ENCODE measurements at regions of chr19 and their contacts with region 1.

Region 1: GRCh38 chr19:13150187-13150930 is at the starts of genes IER2 and STX10:
- DNase-seq: peak; percentile 86 to 97 (median 94)
- ATAC-seq: peak; percentile 55
- H3K4me3 ChIP-seq: peak within 1 kb of the TSS; percentile 77 to 94
- H3K4me3 Mint-ChIP-seq: peak within 1 kb of the TSS; percentile 98
- H3K27ac ChIP-seq: peak within 1 kb of the TSS; percentile 96 to 99
- H3K27ac Mint-ChIP-seq: peak within 1 kb of the TSS; percentile 93
- H3K4me1 ChIP-seq: peaks cover 11% of the 10 kb centered on the region
- H3K4me1 Mint-ChIP-seq: peaks cover 26% of the 10 kb centered on the region
- H3K27me3 ChIP-seq: no peaks in the 10 kb centered on the region
- H3K27me3 Mint-ChIP-seq: no peaks in the 10 kb centered on the region
- CTCF ChIP-seq: peak; percentile 51
- total RNA-seq, gene IER2: 223 to 229 TPM
- total RNA-seq, gene STX10: 35.7 to 37.5 TPM

Region 2: GRCh38 chr19:12789904-12790619 is 360.3 kb before region 1 on chr19:
- CTCF ChIA-PET with region 1: no interaction called
- POLR2A ChIA-PET with region 1: interaction called, 4 read pairs
- intact Hi-C with region 1: loop called in 1 of 2 experiments (anchors 2 kb)
- DNase-seq: peak; percentile 84 to 98 (median 91)
- ATAC-seq: peak; percentile 29
- H3K4me3 ChIP-seq: peak overlapping the region; percentile 86 to 100
- H3K4me3 Mint-ChIP-seq: peak overlapping the region; percentile 93
- H3K27ac ChIP-seq: peak overlapping the region; percentile 100
- H3K27ac Mint-ChIP-seq: peak overlapping the region; percentile 97
- H3K4me1 ChIP-seq: peaks cover 47% of the 10 kb centered on the region
- H3K4me1 Mint-ChIP-seq: peaks cover 37% of the 10 kb centered on the region
- H3K27me3 ChIP-seq: no peaks in the 10 kb centered on the region
- H3K27me3 Mint-ChIP-seq: no peaks in the 10 kb centered on the region
- CTCF ChIP-seq: no peak

Region 3: DNA sequence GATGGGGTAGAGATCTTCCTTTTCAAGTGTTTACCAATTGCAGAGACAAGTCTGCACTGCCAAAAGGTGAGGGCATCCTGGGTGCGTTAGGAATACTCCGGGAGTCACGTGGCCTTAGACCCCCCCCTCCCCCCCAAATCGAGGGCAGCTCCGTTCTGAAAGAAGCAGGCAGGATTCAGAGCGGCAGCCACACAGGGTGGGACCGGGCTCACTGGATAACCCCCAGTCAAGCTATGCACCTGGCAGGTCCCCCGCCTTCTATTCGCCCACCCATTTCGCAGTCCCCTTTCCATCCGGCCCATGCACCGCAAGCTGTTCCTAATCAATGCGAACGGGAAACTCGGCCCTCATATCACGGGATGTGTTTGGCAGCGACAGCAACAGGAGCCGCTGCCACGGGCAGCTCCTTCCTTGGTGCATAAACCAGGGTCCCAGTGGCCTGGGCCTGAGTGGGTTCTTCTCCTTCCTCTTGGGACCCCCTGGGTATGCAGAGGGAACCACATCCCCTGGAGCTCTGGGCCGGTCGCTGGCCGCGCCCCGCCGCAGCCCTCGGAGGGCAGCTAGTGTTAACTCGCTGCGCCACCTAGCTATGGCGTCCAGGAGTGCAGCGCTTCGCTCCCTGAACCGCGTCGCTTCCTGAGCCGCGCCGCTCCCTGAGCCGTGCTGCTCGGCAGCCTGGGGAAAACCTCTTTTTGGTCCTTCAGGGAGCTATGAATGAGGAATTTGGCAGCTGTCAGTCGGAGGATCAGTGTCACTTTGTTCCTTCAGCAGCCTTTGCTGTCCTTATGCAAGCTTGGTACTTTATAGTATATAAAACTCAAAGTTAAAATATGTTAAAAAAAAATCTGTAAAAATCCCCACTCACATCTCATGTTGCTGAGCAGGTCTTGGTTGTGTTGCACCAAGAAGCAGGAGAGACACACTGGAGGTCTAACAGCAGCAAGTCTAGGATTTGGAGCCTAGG is 89.1 kb before region 1 on chr19:
- CTCF ChIA-PET with region 1: no interaction called
- POLR2A ChIA-PET with region 1: no interaction called
- intact Hi-C with region 1: no loop called
- DNase-seq: peak; percentile 61 to 86 (median 82)
- ATAC-seq: peak; percentile 98
- H3K4me3 ChIP-seq: peak overlapping the region; percentile 48 to 71
- H3K4me3 Mint-ChIP-seq: peak overlapping the region; percentile 82
- H3K27ac ChIP-seq: no peak overlapping the region
- H3K27ac Mint-ChIP-seq: no peak overlapping the region
- H3K4me1 ChIP-seq: peaks cover 8% of the 10 kb centered on the region
- H3K4me1 Mint-ChIP-seq: peaks cover 8% of the 10 kb centered on the region
- H3K27me3 ChIP-seq: peaks cover 0 to 2% of the 10 kb centered on the region in 2 experiments
- H3K27me3 Mint-ChIP-seq: peaks cover 13% of the 10 kb centered on the region
- CTCF ChIP-seq: peak; percentile 96

Region 4: GRCh38 chr19:13117772-13118423 is 32.5 kb before region 1 on chr19 and contains the start of gene NACC1:
- CTCF ChIA-PET with region 1: interaction called, 5 read pairs
- POLR2A ChIA-PET with region 1: interaction called, 72 read pairs
- intact Hi-C with region 1: loop called (anchors 1 kb)
- DNase-seq: peak; percentile 81 to 93 (median 87)
- ATAC-seq: peak; percentile 82
- H3K4me3 ChIP-seq: peak within 1 kb of the TSS; percentile 65 to 78
- H3K4me3 Mint-ChIP-seq: peak within 1 kb of the TSS; percentile 98
- H3K27ac ChIP-seq: peak within 1 kb of the TSS; percentile 41 to 61
- H3K27ac Mint-ChIP-seq: peak within 1 kb of the TSS; percentile 96
- H3K4me1 ChIP-seq: peaks cover 35% of the 10 kb centered on the region
- H3K4me1 Mint-ChIP-seq: peaks cover 60% of the 10 kb centered on the region
- H3K27me3 ChIP-seq: no peaks in the 10 kb centered on the region
- H3K27me3 Mint-ChIP-seq: no peaks in the 10 kb centered on the region
- CTCF ChIP-seq: no peak
- total RNA-seq, gene NACC1: 16.8 to 20.8 TPM

Region 5: GRCh38 chr19:13181747-13182388 is 31.5 kb after region 1 on chr19:
- CTCF ChIA-PET with region 1: interaction called, 12 read pairs
- POLR2A ChIA-PET with region 1: interaction called, 21 read pairs
- intact Hi-C with region 1: no loop called
- DNase-seq: peak in 7 of 9 experiments; percentile 24 to 79 (median 63)
- ATAC-seq: peak; percentile 75
- H3K4me3 ChIP-seq: no peak overlapping the region
- H3K4me3 Mint-ChIP-seq: peak overlapping the region; percentile 68
- H3K27ac ChIP-seq: peak overlapping the region in 1 of 2 experiments; percentile 67
- H3K27ac Mint-ChIP-seq: peak overlapping the region; percentile 82
- H3K4me1 ChIP-seq: peaks cover 26% of the 10 kb centered on the region
- H3K4me1 Mint-ChIP-seq: peaks cover 31% of the 10 kb centered on the region
- H3K27me3 ChIP-seq: no peaks in the 10 kb centered on the region
- H3K27me3 Mint-ChIP-seq: no peaks in the 10 kb centered on the region
- CTCF ChIP-seq: no peak

Region 6: GRCh38 chr19:13234518-13234917 is 84.2 kb after region 1 on chr19:
- CTCF ChIA-PET with region 1: interaction called, 4 read pairs
- POLR2A ChIA-PET with region 1: interaction called, 9 read pairs
- intact Hi-C with region 1: loop called (anchors 1 kb)
- DNase-seq: peak; percentile 23 to 82 (median 63)
- ATAC-seq: peak; percentile 99
- H3K4me3 ChIP-seq: no peak overlapping the region
- H3K4me3 Mint-ChIP-seq: peak overlapping the region; percentile 65
- H3K27ac ChIP-seq: no peak overlapping the region
- H3K27ac Mint-ChIP-seq: no peak overlapping the region
- H3K4me1 ChIP-seq: peaks cover 13% of the 10 kb centered on the region
- H3K4me1 Mint-ChIP-seq: peaks cover 14% of the 10 kb centered on the region
- H3K27me3 ChIP-seq: no peaks in the 10 kb centered on the region
- H3K27me3 Mint-ChIP-seq: no peaks in the 10 kb centered on the region
- CTCF ChIP-seq: peak; percentile 91

Region 7: GRCh38 chr19:13774217-13775191 is 624.1 kb after region 1 on chr19 and contains the start of gene C19orf53:
- CTCF ChIA-PET with region 1: no interaction called
- POLR2A ChIA-PET with region 1: no interaction called
- intact Hi-C with region 1: loop called in 1 of 2 experiments (anchors 1 kb)
- DNase-seq: peak; percentile 66 to 94 (median 87)
- ATAC-seq: peak; percentile 96
- H3K4me3 ChIP-seq: peak within 1 kb of the TSS; percentile 89 to 91
- H3K4me3 Mint-ChIP-seq: peak within 1 kb of the TSS; percentile 99
- H3K27ac ChIP-seq: peak within 1 kb of the TSS; percentile 83 to 85
- H3K27ac Mint-ChIP-seq: peak within 1 kb of the TSS; percentile 97
- H3K4me1 ChIP-seq: peaks cover 17% of the 10 kb centered on the region
- H3K4me1 Mint-ChIP-seq: peaks cover 25% of the 10 kb centered on the region
- H3K27me3 ChIP-seq: no peaks in the 10 kb centered on the region
- H3K27me3 Mint-ChIP-seq: no peaks in the 10 kb centered on the region
- CTCF ChIP-seq: no peak
- total RNA-seq, gene C19orf53: 116 TPM

Region 8: DNA sequence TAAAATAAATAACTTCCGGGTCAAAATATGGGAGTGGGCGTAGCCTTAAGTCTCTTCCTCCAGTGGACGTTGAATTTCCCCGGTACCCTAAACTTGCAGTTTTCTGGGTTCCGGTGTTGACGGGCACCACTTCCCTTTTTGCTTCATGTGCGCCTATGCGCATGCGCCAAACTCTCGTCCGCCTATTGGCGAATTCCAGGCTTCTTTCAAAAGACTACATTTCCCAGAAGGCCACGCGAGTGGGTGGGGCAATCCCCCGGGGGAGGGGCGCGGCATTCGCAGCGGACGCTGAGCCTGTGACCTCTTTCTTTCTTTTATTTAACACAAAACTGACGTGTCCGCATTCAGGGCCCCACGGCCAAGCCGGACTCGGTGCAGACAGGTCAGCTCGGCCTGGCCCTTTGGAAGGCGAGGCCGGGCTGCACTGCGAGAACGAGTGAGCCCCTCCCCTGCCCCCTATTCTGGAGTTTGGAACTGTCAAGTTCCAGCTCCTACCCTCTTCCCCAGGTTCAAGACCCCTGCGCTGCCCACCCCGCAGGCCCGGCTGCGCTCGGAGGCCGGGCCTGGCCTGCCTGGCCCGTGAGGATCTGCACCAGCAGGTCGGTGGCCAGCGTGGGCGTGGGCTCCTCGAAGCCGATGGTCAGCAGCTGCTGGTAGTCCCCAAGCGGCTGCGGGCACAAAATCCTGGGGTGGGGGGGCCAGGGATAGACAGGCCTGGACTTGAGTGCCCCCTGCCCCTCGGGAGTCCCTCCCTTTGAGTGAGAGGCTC is 931.1 kb after region 1 on chr19:
- CTCF ChIA-PET with region 1: no interaction called
- POLR2A ChIA-PET with region 1: no interaction called
- intact Hi-C with region 1: loop called (anchors 2 to 5 kb)
- DNase-seq: peak; percentile 98 to 100 (median 99)
- ATAC-seq: peak; percentile 93
- H3K4me3 ChIP-seq: peak overlapping the region; percentile 77 to 89
- H3K4me3 Mint-ChIP-seq: peak overlapping the region; percentile 91
- H3K27ac ChIP-seq: peak overlapping the region; percentile 60 to 83
- H3K27ac Mint-ChIP-seq: peak overlapping the region; percentile 90
- H3K4me1 ChIP-seq: peaks cover 17% of the 10 kb centered on the region
- H3K4me1 Mint-ChIP-seq: peaks cover 20% of the 10 kb centered on the region
- H3K27me3 ChIP-seq: no peaks in the 10 kb centered on the region
- H3K27me3 Mint-ChIP-seq: no peaks in the 10 kb centered on the region
- CTCF ChIP-seq: no peak

Measured in CD8-positive, alpha-beta T cell (primary cell).